ENCODE measurements at regions of chr13 and their contacts with region 1.

Region 1: GRCh38 chr13:91375116-91375729 is 23.2 kb upstream of the GPC5 start:
- DNase-seq: no peak
- H3K4me3 ChIP-seq: no peak overlapping the region
- H3K27ac ChIP-seq: no peak overlapping the region
- H3K4me1 ChIP-seq: no peaks in the 10 kb centered on the region
- H3K27me3 ChIP-seq: no peaks in the 10 kb centered on the region
- CTCF ChIP-seq: peak; percentile 57 to 59

Region 2: GRCh38 chr13:91406619-91407018 is 31.4 kb after region 1 on chr13:
- CTCF ChIA-PET with region 1: no interaction called
- dilution Hi-C with region 1: no loop called
- in situ Hi-C with region 1: no loop called
- intact Hi-C with region 1: loop called (anchors 2 kb)
- DNase-seq: peak; percentile 21
- H3K4me3 ChIP-seq: no peak overlapping the region
- H3K27ac ChIP-seq: no peak overlapping the region
- H3K4me1 ChIP-seq: no peaks in the 10 kb centered on the region
- H3K27me3 ChIP-seq: peaks cover under 1% of the 10 kb centered on the region
- CTCF ChIP-seq: peak; percentile 49 to 57

Region 3: GRCh38 chr13:91459485-91459884 is 84.3 kb after region 1 on chr13:
- CTCF ChIA-PET with region 1: no interaction called
- dilution Hi-C with region 1: no loop called
- in situ Hi-C with region 1: no loop called
- intact Hi-C with region 1: loop called (anchors 1 kb)
- DNase-seq: no peak
- H3K4me3 ChIP-seq: no peak overlapping the region
- H3K27ac ChIP-seq: no peak overlapping the region
- H3K4me1 ChIP-seq: no peaks in the 10 kb centered on the region
- H3K27me3 ChIP-seq: no peaks in the 10 kb centered on the region
- CTCF ChIP-seq: no peak

Region 4: GRCh38 chr13:91661692-91662490 is 286.7 kb after region 1 on chr13:
- CTCF ChIA-PET with region 1: no interaction called
- dilution Hi-C with region 1: no loop called
- in situ Hi-C with region 1: no loop called
- intact Hi-C with region 1: no loop called
- DNase-seq: no peak
- H3K4me3 ChIP-seq: no peak overlapping the region
- H3K27ac ChIP-seq: no peak overlapping the region
- H3K4me1 ChIP-seq: no peaks in the 10 kb centered on the region
- H3K27me3 ChIP-seq: no peaks in the 10 kb centered on the region
- CTCF ChIP-seq: no peak

Region 5: GRCh38 chr13:91722267-91722884 is 347.2 kb after region 1 on chr13:
- CTCF ChIA-PET with region 1: no interaction called
- dilution Hi-C with region 1: no loop called
- in situ Hi-C with region 1: loop called (anchors 10 kb)
- intact Hi-C with region 1: loop called (anchors 1 kb)
- DNase-seq: peak; percentile 2
- H3K4me3 ChIP-seq: no peak overlapping the region
- H3K27ac ChIP-seq: no peak overlapping the region
- H3K4me1 ChIP-seq: no peaks in the 10 kb centered on the region
- H3K27me3 ChIP-seq: no peaks in the 10 kb centered on the region
- CTCF ChIP-seq: peak; percentile 39 to 54